B cell (primary cell): ENCODE measurements at regions of chr2 and their contacts with region 1.

Region 1: DNA sequence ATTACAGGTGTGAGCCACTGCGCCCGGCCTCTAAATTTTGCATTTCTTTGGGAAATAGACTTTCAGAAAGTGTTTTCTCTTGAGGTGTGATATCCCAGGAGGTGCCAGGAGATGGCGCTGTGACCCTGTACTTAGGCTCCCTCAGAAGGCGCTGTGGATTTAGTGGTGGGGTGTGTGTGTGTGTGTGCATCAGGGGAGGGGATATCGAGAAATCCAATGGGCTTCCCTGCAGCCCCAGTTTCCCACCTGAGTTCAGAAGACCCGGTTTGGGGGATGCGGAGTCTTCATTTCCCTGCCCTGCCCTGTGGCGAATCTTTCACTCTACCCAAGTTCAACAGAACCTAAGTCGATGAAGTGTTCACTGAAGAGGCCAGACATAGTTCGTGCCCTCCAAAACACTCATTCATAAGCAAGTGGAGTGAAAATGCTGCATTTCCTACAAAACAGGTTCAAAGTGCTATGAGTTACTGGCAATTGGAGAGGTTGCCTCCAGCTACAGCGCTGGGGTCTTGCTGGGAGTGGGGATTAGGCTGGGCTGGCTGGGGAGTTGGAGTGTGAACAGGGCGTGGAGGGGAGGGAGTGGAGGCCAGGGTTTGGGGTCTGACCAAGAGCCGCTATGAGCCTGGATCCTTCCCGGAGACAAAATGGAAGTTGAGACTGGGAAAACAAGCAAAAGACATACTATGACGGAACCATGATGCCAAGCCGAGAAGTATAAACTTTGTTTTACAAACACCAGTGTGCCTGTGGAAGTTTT is 6.5 kb upstream of the WNT6 start:
- DNase-seq: peak; percentile 81
- ATAC-seq: peak; percentile 87
- H3K4me3 ChIP-seq: no peak overlapping the region
- H3K4me3 Mint-ChIP-seq: no peak overlapping the region
- H3K27ac ChIP-seq: no peak overlapping the region
- H3K27ac Mint-ChIP-seq: no peak overlapping the region
- H3K4me1 ChIP-seq: peaks cover 3% of the 10 kb centered on the region in 2 donors
- H3K4me1 Mint-ChIP-seq: no peaks in the 10 kb centered on the region
- H3K27me3 ChIP-seq: peaks cover 0 to 72% (median 27%) of the 10 kb centered on the region in 4 experiments
- H3K27me3 Mint-ChIP-seq: peaks cover 61% of the 10 kb centered on the region
- CTCF ChIP-seq: peak; percentile 82

Region 2: DNA sequence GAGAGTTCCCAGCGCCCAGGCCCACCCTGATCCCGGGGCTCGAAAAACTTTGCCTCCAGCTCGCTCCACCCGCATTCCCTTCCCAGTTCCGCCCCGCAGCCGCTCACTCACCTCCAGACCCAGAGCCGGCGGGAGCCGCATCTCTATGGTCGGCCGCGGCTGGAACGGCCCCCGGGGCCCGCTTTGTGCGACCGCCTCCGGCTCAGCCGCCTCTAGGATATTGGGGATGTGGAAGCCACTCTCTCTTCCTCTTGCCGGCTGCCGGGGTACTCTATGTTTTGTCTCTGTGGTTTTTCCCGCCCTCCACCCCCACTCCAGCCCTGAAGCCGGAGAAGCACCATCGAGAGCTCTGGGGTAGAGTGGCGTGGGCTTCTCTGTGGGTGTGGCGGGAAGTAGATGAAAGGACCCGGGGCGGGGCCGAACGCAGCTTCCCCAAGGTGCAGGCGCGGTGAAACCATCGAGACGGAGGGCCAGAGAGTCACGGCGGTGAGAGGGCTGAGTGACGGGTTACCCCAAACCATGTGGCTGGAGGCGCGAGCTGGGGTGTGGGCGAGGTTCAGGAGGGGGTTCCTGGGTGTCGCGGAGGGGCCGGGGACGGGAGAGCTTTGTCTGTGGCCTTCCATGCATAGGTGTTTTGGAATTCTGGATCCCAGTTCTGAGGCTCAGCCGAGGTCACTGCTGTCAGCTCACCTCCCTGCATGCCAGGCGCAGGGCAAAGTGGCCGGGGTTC is 193.7 kb before region 1 on chr2 and contains the starts of genes BCS1L and ZNF142:
- CTCF ChIA-PET with region 1: interaction called, 37 read pairs
- POLR2A ChIA-PET with region 1: no interaction called
- intact Hi-C with region 1: no loop called
- DNase-seq: peak; percentile 91
- ATAC-seq: peak; percentile 97
- H3K4me3 ChIP-seq: peak within 1 kb of the TSS; percentile 65 to 93 (median 81)
- H3K4me3 Mint-ChIP-seq: peak within 1 kb of the TSS; percentile 99
- H3K27ac ChIP-seq: peak within 1 kb of the TSS; percentile 46 to 77
- H3K27ac Mint-ChIP-seq: peak within 1 kb of the TSS; percentile 95
- H3K4me1 ChIP-seq: peaks cover 12 to 16% of the 10 kb centered on the region in 2 donors
- H3K4me1 Mint-ChIP-seq: peaks cover 28% of the 10 kb centered on the region
- H3K27me3 ChIP-seq: no peaks in the 10 kb centered on the region
- H3K27me3 Mint-ChIP-seq: no peaks in the 10 kb centered on the region
- CTCF ChIP-seq: no peak
- total RNA-seq, gene BCS1L: 56.1 and 60.1 TPM in 2 replicates
- total RNA-seq, gene ZNF142: 51.1 and 56.1 TPM in 2 replicates

Region 3: GRCh38 chr2:218898109-218898878 is 45.2 kb after region 1 on chr2:
- CTCF ChIA-PET with region 1: interaction called, 109 read pairs
- POLR2A ChIA-PET with region 1: interaction called, 6 read pairs
- intact Hi-C with region 1: loop called (anchors 1 kb)
- DNase-seq: peak; percentile 87
- ATAC-seq: peak; percentile 18
- H3K4me3 ChIP-seq: peak overlapping the region in 4 of 5 experiments; percentile 66 to 68 (median 68)
- H3K4me3 Mint-ChIP-seq: peak overlapping the region; percentile 87
- H3K27ac ChIP-seq: no peak overlapping the region
- H3K27ac Mint-ChIP-seq: peak overlapping the region; percentile 91
- H3K4me1 ChIP-seq: peaks cover 47 to 54% of the 10 kb centered on the region in 2 donors
- H3K4me1 Mint-ChIP-seq: peaks cover 48% of the 10 kb centered on the region
- H3K27me3 ChIP-seq: peaks cover 0 to 28% (median 18%) of the 10 kb centered on the region in 4 experiments
- H3K27me3 Mint-ChIP-seq: peaks cover 31% of the 10 kb centered on the region
- CTCF ChIP-seq: peak; percentile 99

Region 4: DNA sequence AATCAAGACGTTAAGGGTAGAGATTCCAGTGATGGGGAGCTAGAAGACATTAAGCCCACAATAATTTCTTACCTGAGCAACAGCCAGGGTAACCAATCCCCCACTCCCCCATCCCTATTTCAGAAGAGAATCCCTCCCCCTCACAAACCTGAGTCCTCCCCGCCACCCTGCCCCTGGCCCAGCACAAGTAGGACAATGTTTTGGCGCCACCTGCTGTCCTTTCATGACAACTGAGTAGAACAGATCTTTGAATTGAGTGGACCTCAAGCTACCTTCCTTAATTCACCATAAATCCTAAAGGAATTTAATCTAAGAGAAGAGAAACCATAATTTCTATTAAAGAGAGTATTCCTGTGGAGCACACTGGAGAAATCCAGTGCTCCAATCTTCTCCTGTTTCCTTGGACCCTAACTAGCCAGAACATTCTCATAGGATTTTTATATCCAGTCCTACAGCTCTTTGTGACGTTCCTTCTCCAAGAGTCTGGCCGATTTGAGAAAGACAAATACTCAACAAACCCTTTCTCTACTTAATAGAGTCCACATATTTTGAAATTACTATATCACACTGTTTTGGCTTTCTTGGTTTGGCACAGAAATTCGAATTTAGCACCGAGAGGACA is 266.4 kb after region 1 on chr2:
- CTCF ChIA-PET with region 1: interaction called, 10 read pairs
- POLR2A ChIA-PET with region 1: no interaction called
- intact Hi-C with region 1: loop called (anchors 1 kb)
- DNase-seq: peak; percentile 61
- ATAC-seq: no peak
- H3K4me3 ChIP-seq: no peak overlapping the region
- H3K4me3 Mint-ChIP-seq: no peak overlapping the region
- H3K27ac ChIP-seq: no peak overlapping the region
- H3K27ac Mint-ChIP-seq: no peak overlapping the region
- H3K4me1 ChIP-seq: no peaks in the 10 kb centered on the region
- H3K4me1 Mint-ChIP-seq: peaks cover 2% of the 10 kb centered on the region
- H3K27me3 ChIP-seq: no peaks in the 10 kb centered on the region
- H3K27me3 Mint-ChIP-seq: no peaks in the 10 kb centered on the region
- CTCF ChIP-seq: peak; percentile 74